Endothelial cell of umbilical vein (primary cell): ENCODE measurements at regions of chr20 and their contacts with region 1.

Region 1: GRCh38 chr20:20237093-20237959 is 130.6 kb upstream of the INSM1 start:
- DNase-seq: peak; percentile 37
- H3K4me3 ChIP-seq: no peak overlapping the region
- H3K27ac ChIP-seq: no peak overlapping the region
- H3K4me1 ChIP-seq: no peaks in the 10 kb centered on the region
- H3K27me3 ChIP-seq: peaks cover 0 to 1% of the 10 kb centered on the region in 2 experiments
- CTCF ChIP-seq: peak; percentile 62 to 71
- POLR2A ChIP-seq: no peak

Region 2: DNA sequence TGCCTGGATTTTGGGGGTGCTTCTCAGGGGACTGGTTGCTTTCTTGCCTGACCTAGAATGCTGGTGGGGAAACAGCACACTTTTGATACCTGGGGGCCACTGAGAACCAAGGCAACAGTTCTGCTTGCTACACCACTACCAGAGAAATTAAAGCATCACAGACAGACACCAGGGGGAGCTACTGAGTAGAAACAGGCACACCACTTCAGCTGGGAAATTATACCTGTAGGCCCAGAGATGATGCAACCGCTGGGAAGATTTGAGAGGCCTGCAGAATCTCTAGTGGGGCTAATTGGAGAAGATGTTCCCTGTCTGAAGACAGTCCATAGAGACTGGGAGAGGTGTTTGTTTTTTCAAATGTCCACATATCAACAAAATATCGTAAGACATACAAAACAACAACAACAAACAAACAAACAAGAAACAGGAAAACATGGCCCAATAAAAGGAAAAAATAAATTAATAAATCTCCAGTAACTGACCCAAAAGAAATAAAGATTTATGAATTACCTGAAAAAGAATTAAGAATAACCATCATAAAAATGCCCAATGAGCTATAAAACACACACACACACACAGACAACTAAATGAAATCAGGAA is 608.7 kb before region 1 on chr20:
- CTCF ChIA-PET with region 1: interaction called, 9 read pairs
- POLR2A ChIA-PET with region 1: no interaction called
- dilution Hi-C with region 1: no loop called
- intact Hi-C with region 1: loop called (anchors 2 kb)
- DNase-seq: peak; percentile 66
- H3K4me3 ChIP-seq: no peak overlapping the region
- H3K27ac ChIP-seq: no peak overlapping the region
- H3K4me1 ChIP-seq: no peaks in the 10 kb centered on the region
- H3K27me3 ChIP-seq: peaks cover 0 to 1% of the 10 kb centered on the region in 2 experiments
- CTCF ChIP-seq: peak; percentile 70 to 73
- POLR2A ChIP-seq: no peak

Region 3: GRCh38 chr20:20083807-20084206 is 153.5 kb before region 1 on chr20:
- CTCF ChIA-PET with region 1: interaction called, 53 read pairs
- POLR2A ChIA-PET with region 1: no interaction called
- dilution Hi-C with region 1: no loop called
- intact Hi-C with region 1: loop called (anchors 1 kb)
- DNase-seq: peak; percentile 33
- H3K4me3 ChIP-seq: no peak overlapping the region
- H3K27ac ChIP-seq: no peak overlapping the region
- H3K4me1 ChIP-seq: no peaks in the 10 kb centered on the region
- H3K27me3 ChIP-seq: peaks cover 5 to 15% of the 10 kb centered on the region in 2 experiments
- CTCF ChIP-seq: peak in 1 of 2 donors; percentile 13
- POLR2A ChIP-seq: no peak

Region 4: GRCh38 chr20:20215976-20216727 is 21.2 kb before region 1 on chr20:
- CTCF ChIA-PET with region 1: interaction called, 18 read pairs
- POLR2A ChIA-PET with region 1: no interaction called
- dilution Hi-C with region 1: no loop called
- intact Hi-C with region 1: no loop called
- DNase-seq: no peak
- H3K4me3 ChIP-seq: no peak overlapping the region
- H3K27ac ChIP-seq: no peak overlapping the region
- H3K4me1 ChIP-seq: no peaks in the 10 kb centered on the region
- H3K27me3 ChIP-seq: peaks cover 0 to 2% of the 10 kb centered on the region in 2 experiments
- CTCF ChIP-seq: no peak
- POLR2A ChIP-seq: no peak

Region 5: DNA sequence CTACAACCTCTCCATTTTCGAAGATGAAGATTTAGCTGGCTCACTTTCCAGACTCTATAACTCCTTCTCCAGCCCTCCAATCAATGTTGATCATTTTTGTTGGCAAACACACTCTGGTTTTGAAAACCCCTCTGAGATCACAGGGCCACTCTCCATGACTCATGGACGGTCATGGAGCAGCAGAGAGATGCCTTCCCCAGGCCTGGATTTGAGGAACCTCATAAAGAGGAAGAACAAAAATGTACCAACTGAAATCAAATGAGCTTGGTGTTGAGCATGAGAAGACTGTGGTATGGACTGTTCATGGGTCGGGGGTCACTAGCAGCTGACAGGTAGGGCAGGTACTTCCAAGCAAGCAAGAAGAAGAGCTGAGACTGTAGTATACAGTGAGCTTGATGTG is 17.8 kb after region 1 on chr20:
- CTCF ChIA-PET with region 1: interaction called, 16 read pairs
- POLR2A ChIA-PET with region 1: no interaction called
- dilution Hi-C with region 1: no loop called
- intact Hi-C with region 1: no loop called
- DNase-seq: no peak
- H3K4me3 ChIP-seq: no peak overlapping the region
- H3K27ac ChIP-seq: no peak overlapping the region
- H3K4me1 ChIP-seq: no peaks in the 10 kb centered on the region
- H3K27me3 ChIP-seq: no peaks in the 10 kb centered on the region
- CTCF ChIP-seq: no peak
- POLR2A ChIP-seq: no peak